ENCODE measurements at regions of chr17 and their contacts with region 1.

Region 1: GRCh38 chr17:7887482-7888183 is 956 bp upstream of the CHD3 start:
- DNase-seq: peak; percentile 77
- H3K4me3 Mint-ChIP-seq: no peak overlapping the region
- H3K27ac Mint-ChIP-seq: no peak overlapping the region
- H3K4me1 Mint-ChIP-seq: peaks cover 3% of the 10 kb centered on the region
- H3K27me3 Mint-ChIP-seq: no peaks in the 10 kb centered on the region

Region 2: GRCh38 chr17:7834962-7835813 is 52.4 kb before region 1 on chr17:
- intact Hi-C with region 1: loop called (anchors 1 kb)
- DNase-seq: peak; percentile 75
- H3K4me3 Mint-ChIP-seq: peak overlapping the region; percentile 96
- H3K27ac Mint-ChIP-seq: peak overlapping the region; percentile 96
- H3K4me1 Mint-ChIP-seq: peaks cover 46% of the 10 kb centered on the region
- H3K27me3 Mint-ChIP-seq: peaks cover 17% of the 10 kb centered on the region

Region 3: DNA sequence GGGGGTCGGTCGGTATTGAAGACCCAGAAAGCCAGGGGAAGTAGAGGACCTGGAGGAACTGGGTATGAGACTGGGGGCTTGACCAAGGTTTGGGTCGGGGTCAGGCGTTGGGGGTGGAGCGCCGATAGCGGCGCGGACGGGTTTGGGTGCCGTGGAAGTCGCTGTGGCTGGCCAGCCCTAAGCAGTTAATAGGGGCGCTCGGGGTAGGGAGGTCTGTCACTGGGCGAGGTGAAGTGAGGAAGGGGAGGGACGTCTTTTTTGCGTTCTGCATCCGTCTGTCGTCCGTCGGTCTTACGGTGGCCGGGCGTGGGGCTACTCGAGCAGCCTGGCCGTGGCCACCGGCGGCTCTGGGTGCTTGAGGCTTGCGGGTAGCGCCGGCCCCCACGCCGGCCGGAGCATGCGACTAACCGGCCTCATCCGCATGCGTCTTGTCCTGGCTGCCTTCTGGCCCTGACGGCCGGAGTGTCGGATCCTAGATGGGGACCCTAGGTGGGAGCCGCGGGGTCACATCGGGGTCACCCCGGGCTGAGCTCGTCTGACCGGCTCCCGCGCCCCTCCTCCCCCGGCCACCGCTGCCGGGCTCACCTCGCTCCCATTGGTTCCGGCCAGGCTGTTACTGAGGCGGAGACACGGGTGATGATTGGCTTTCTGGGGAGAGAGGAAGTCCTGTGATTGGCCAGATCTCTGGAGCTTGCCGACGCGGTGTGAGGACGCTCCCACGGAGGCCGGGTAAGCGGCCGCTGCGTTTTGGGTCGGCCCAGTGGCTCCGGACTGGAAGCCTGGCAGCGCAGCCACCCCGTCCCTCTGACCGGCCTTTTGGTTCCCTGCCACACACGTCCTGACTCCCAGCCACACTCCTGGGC is 43.1 kb before region 1 on chr17:
- intact Hi-C with region 1: loop called (anchors 1 kb)
- DNase-seq: peak; percentile 87
- H3K4me3 Mint-ChIP-seq: peak overlapping the region; percentile 89
- H3K27ac Mint-ChIP-seq: peak overlapping the region; percentile 96
- H3K4me1 Mint-ChIP-seq: peaks cover 37% of the 10 kb centered on the region
- H3K27me3 Mint-ChIP-seq: no peaks in the 10 kb centered on the region

Region 4: GRCh38 chr17:8151123-8151640 is 263.5 kb after region 1 on chr17:
- intact Hi-C with region 1: loop called (anchors 5 kb)
- DNase-seq: peak; percentile 91
- H3K4me3 Mint-ChIP-seq: peak overlapping the region; percentile 95
- H3K27ac Mint-ChIP-seq: peak overlapping the region; percentile 98
- H3K4me1 Mint-ChIP-seq: peaks cover 37% of the 10 kb centered on the region
- H3K27me3 Mint-ChIP-seq: no peaks in the 10 kb centered on the region